GM10248 (cell line): ENCODE measurements at regions of chr6 and their contacts with region 1.

Region 1: DNA sequence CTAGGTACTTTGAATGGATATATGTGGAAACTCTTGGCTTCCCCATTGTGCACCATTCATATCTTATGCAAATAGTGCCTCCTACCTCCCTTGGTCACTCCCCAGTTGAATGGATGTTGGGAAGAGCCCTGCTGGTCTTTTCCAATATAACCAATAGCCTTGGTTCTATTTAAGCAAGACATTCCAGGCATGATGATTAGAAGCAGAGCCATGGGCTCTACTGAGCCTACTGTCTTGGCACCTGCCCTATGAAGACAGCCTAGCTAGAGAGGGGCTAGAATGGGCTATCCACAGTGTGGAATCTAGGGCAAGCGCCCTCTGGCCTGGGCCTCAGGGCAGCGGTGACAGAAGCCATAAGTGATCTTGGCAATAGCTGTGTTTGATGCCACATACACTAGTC is 15.6 kb downstream of the SLC17A1 start:
- DNase-seq: no peak
- CTCF ChIP-seq: no peak

Region 2: GRCh38 chr6:25601800-25602673 is 214.2 kb before region 1 on chr6:
- CTCF ChIA-PET with region 1: no interaction called
- POLR2A ChIA-PET with region 1: no interaction called
- DNase-seq: peak; percentile 40
- CTCF ChIP-seq: peak; percentile 50

Region 3: DNA sequence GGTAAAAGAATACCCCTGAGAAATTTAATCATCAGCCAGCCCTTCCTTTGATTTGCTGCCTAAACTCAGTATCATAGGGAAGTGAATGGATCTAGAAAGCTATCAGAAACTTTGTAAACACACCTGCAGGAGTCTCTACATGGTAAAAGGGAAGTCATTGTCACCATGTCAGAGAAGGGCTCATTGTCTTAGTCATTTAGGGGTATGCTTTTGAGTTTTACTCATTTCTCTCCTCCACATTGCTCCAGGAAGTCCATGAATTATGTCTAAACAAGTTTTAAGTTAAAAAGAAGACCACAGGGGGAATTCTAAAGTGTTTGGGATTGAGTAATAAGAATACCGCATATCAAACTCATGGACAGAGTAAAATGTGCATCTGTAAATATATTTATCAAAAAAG is 13.1 kb after region 1 on chr6:
- CTCF ChIA-PET with region 1: interaction called, 15 read pairs
- POLR2A ChIA-PET with region 1: no interaction called
- DNase-seq: peak; percentile 18
- CTCF ChIP-seq: no peak